GM10248 (cell line): ENCODE measurements at regions of chr21 and their contacts with region 1.

Region 1: DNA sequence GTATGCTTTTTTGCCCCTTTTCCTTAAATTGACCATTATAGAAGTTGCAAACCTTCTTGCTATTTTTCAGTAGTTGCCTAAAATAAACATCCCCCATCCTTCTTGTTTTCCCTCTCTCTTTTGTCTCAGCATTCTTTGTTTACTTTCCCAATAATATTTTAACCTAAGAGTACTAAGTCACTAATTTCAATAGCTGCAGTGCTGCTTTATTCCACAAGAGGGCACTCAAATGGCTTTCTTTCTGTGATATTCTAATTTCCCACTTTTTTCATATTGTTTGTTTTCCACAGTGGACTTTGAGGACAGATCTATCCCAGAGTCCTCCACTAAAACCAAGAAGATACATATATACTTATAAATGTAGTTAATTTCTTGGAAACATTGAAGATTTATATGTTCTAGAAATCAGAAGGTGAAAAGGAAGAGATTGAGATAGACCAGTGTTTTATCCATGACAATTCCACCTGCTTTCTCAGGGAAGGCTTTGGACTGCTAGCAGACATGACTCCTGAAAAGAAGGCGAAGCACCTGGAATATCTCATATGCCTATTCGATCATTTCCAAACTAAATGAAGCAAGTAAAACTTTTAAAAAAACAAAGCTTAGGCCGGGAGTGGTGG is 104.8 kb upstream of the GRIK1 start:
- DNase-seq: no peak
- CTCF ChIP-seq: peak; percentile 73

Region 2: GRCh38 chr21:30027986-30028385 is 16.6 kb before region 1 on chr21:
- CTCF ChIA-PET with region 1: interaction called, 16 read pairs
- POLR2A ChIA-PET with region 1: no interaction called
- DNase-seq: no peak
- CTCF ChIP-seq: no peak

Region 3: GRCh38 chr21:30058928-30059327 is 14.4 kb after region 1 on chr21:
- CTCF ChIA-PET with region 1: interaction called, 19 read pairs
- POLR2A ChIA-PET with region 1: no interaction called
- DNase-seq: no peak
- CTCF ChIP-seq: no peak